Esophagus muscularis mucosa (tissue), 4 donors: ENCODE measurements at regions of chr11 and their contacts with region 1.

Region 1: DNA sequence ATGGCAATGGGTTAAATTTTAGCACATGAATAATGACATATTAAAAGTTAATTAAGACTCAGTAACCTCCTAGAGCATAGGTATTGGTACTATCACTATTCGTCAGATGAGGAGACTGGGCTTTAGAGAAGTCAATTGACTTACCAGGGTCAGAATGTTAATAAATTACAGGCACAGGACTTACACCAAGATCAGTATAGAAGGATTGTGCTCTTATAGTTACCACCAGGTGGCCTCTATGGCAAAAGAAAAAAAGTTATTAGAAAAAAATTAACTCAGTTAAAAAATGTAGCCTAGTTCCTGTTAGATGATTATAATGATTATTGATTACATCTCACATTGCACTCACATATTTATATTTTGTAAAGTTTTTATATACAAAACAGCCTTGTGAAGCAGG is 1163.7 kb downstream of the FAM181B start:
- DNase-seq: no peak
- H3K4me3 ChIP-seq: no peak overlapping the region
- H3K27ac ChIP-seq: no peak overlapping the region
- H3K4me1 ChIP-seq: no peaks in the 10 kb centered on the region
- H3K27me3 ChIP-seq: no peaks in the 10 kb centered on the region
- CTCF ChIP-seq: no peak
- EP300 ChIP-seq: no peak
- POLR2A ChIP-seq: no peak

Region 2: GRCh38 chr11:81548123-81548522 is 21.9 kb before region 1 on chr11:
- intact Hi-C with region 1: loop called (anchors 2 kb)
- DNase-seq: no peak
- H3K4me3 ChIP-seq: no peak overlapping the region
- H3K27ac ChIP-seq: no peak overlapping the region
- H3K4me1 ChIP-seq: no peaks in the 10 kb centered on the region
- H3K27me3 ChIP-seq: no peaks in the 10 kb centered on the region
- CTCF ChIP-seq: no peak
- EP300 ChIP-seq: no peak
- POLR2A ChIP-seq: no peak

Region 3: DNA sequence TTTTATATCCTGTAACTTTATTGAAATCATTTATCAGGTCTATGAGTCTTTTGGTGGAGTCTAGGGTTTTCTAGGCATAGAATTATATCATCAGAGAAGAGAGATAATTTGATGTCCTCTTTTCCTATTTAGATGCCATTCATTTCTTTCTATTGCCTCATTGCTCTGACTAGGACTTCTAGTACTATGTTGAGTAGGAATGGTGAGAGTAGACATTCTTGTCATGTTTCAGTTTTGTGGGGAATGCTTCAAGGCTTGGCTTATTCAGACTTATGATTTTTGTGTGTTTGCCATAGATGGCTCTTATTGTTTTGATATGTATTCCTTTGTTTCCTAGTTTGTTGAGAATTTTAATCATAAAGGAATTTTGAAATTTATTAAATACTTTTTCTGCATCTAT is 85.4 kb after region 1 on chr11:
- intact Hi-C with region 1: no loop called
- DNase-seq: no peak
- H3K4me3 ChIP-seq: no peak overlapping the region
- H3K27ac ChIP-seq: no peak overlapping the region
- H3K4me1 ChIP-seq: no peaks in the 10 kb centered on the region
- H3K27me3 ChIP-seq: no peaks in the 10 kb centered on the region
- CTCF ChIP-seq: no peak
- EP300 ChIP-seq: no peak
- POLR2A ChIP-seq: no peak